Caco-2 (cell line): ENCODE measurements at regions of chr16 and their contacts with region 1.

Region 1: DNA sequence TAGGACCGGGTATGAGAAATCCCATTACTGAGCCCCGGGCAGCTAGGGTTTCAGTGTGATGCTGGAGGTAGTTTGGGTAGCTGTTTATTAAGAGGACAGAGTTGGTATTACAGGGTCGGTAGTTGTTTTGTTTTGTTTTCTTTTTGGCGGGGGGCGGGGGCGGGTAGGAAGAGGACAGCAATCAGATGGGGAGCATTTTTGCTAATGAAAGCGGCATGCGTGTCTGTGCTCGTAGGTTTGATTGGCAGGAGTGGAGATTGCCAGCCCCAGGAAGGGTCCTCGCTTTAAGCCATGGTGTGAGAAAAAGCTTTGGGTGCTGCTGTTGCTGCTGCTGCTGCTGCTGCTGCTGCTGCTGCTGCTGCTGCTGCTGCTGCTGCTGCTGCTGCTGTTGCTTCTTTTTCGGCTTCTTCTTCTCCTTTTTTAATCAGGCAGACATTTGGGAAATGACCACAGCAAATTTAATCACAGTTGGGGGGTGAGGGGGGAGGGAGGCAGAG is 498.5 kb upstream of the ZFHX3 start:
- DNase-seq: no peak
- H3K4me3 ChIP-seq: no peak overlapping the region
- H3K4me3 Mint-ChIP-seq: peak overlapping the region; percentile 39
- H3K27ac Mint-ChIP-seq: no peak overlapping the region
- H3K4me1 ChIP-seq: peaks cover 19% of the 10 kb centered on the region
- H3K4me1 Mint-ChIP-seq: peaks cover 20% of the 10 kb centered on the region
- H3K27me3 ChIP-seq: no peaks in the 10 kb centered on the region
- H3K27me3 Mint-ChIP-seq: peaks cover 6% of the 10 kb centered on the region
- CTCF ChIP-seq: no peak

Region 2: DNA sequence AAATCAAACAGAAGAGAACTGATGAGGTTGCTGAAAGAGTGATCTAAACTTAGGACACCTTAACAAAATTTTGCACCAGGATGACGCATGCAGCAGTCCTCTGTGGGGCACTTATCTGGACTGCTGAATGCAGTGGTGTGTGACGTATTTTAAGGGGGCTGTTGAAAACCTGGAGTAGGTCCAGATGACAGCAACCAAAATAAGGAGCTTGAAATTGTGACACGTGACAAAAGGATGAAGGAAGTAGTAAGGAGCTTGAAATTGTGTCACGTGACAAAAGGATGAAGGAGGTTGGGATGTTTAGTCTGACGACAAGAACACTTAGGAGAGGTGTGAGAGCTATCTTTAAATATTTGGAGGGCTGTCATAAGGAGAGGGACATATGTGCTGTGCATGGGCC is 234.5 kb before region 1 on chr16:
- CTCF ChIA-PET with region 1: no interaction called
- POLR2A ChIA-PET with region 1: interaction called, 14 read pairs
- intact Hi-C with region 1: no loop called
- DNase-seq: no peak
- H3K4me3 ChIP-seq: no peak overlapping the region
- H3K4me3 Mint-ChIP-seq: no peak overlapping the region
- H3K27ac Mint-ChIP-seq: no peak overlapping the region
- H3K4me1 ChIP-seq: no peaks in the 10 kb centered on the region
- H3K4me1 Mint-ChIP-seq: no peaks in the 10 kb centered on the region
- H3K27me3 ChIP-seq: no peaks in the 10 kb centered on the region; the same call in 1 of the 2 replicates
- H3K27me3 Mint-ChIP-seq: no peaks in the 10 kb centered on the region
- CTCF ChIP-seq: no peak